ENCODE measurements at regions of chr5 and their contacts with region 1.

Region 1: DNA sequence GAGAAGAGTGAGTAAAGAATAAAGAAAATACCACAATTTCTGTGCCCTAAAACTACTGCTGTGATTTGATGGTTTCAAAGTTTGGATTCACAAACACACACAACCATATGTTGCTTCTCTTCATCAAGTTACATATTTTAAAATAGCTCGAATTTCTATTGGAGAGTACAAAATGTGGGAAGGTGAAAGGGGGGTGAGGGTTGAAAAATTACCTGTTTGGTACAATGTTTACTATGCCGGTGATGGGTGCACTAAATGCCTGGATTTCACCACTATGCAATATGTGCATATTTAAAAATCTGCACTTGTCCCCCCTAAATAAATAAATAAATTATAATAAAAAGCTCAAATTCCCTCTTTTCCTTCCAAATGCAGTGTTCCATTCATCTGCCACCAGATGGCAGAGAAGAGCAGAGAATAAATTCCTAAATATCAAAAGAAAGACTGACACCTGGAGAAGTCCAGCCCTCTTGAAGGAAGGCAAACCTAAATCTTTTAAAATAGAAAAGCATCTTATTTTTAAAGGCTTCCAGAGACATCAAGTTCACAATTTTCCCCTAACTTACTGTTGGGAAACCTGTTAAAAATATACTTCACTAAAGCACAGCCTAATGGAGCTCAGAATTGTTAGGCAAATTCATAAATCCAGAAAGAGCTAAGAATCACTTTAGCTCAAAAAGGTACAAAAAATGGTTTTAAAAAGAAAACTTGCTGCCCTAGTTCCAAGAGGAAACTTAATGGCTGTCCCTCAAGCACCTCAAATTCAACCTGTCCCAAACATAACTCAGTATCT is 24.8 kb upstream of the HNRNPA0 start:
- DNase-seq: no peak
- H3K4me3 ChIP-seq: no peak overlapping the region
- H3K27ac ChIP-seq: no peak overlapping the region
- H3K4me1 ChIP-seq: no peaks in the 10 kb centered on the region
- H3K27me3 ChIP-seq: peaks cover 0 to 1% (median 0%) of the 10 kb centered on the region in 4 experiments; a peak in 1 of 7 replicates
- CTCF ChIP-seq: peak in 2 of 3 experiments; percentile 38 to 52; a peak in 2 of 4 replicates
- EP300 ChIP-seq: no peak
- POLR2A ChIP-seq: no peak
- RAD21 ChIP-seq: peak; percentile 69 to 71

Region 2: DNA sequence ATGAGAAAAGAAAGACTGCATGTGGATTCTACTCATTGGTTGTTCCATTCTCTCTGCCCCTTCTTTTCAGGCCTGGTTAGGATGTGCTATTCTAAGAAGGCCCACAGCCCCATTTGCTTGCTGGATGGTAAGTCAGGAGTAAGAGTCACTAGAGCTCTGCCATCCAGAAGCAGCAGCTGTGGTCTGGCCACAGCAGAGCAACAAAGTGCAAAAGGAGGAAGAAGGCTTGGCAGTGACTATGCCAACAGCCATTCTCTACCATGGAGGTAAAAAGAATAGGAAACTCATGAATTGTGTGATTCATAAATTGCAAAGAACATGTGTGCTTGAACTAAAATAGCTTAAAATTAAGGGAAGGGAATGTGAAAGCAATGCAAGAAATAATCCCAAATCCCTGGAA is 64.0 kb before region 1 on chr5:
- CTCF ChIA-PET with region 1: no interaction called
- POLR2A ChIA-PET with region 1: no interaction called
- DNase-seq: no peak
- H3K4me3 ChIP-seq: no peak overlapping the region
- H3K27ac ChIP-seq: no peak overlapping the region
- H3K4me1 ChIP-seq: no peaks in the 10 kb centered on the region
- H3K27me3 ChIP-seq: no peaks in the 10 kb centered on the region
- CTCF ChIP-seq: no peak
- EP300 ChIP-seq: no peak
- POLR2A ChIP-seq: no peak
- RAD21 ChIP-seq: no peak

Region 3: GRCh38 chr5:137754126-137754960 is 24.6 kb before region 1 on chr5 and contains the start of gene HNRNPA0:
- CTCF ChIA-PET with region 1: interaction called, 10 read pairs
- POLR2A ChIA-PET with region 1: interaction called, 7 read pairs
- DNase-seq: peak; percentile 82 to 96
- H3K4me3 ChIP-seq: peak within 1 kb of the TSS; percentile 92 to 100 (median 100)
- H3K27ac ChIP-seq: peak within 1 kb of the TSS; percentile 100
- H3K4me1 ChIP-seq: peaks cover 0 to 3% (median 0%) of the 10 kb centered on the region in 4 experiments; a peak in 3 of 7 replicates
- H3K27me3 ChIP-seq: no peaks in the 10 kb centered on the region
- CTCF ChIP-seq: no peak
- EP300 ChIP-seq: peak; percentile 18 to 100; a peak in 2 of 3 replicates
- POLR2A ChIP-seq: peak; percentile 97 to 99
- RAD21 ChIP-seq: no peak; a peak in 1 of 4 replicates
- total RNA-seq, gene HNRNPA0: 71.3 and 74.9 TPM in 2 replicates

Region 4: GRCh38 chr5:137800700-137801411 is 21.9 kb after region 1 on chr5:
- CTCF ChIA-PET with region 1: interaction called, 25 read pairs
- POLR2A ChIA-PET with region 1: no interaction called
- DNase-seq: no peak
- H3K4me3 ChIP-seq: no peak overlapping the region
- H3K27ac ChIP-seq: no peak overlapping the region
- H3K4me1 ChIP-seq: no peaks in the 10 kb centered on the region
- H3K27me3 ChIP-seq: no peaks in the 10 kb centered on the region
- CTCF ChIP-seq: peak in 1 of 3 experiments; percentile 16; a peak in 2 of 4 replicates
- EP300 ChIP-seq: no peak
- POLR2A ChIP-seq: no peak
- RAD21 ChIP-seq: 0 out of 4 replicates have a peak, but pooled peaks of 1 of the 2 experiments have one; percentile 21

Region 5: GRCh38 chr5:137815202-137815985 is 36.4 kb after region 1 on chr5:
- CTCF ChIA-PET with region 1: interaction called, 16 read pairs
- POLR2A ChIA-PET with region 1: no interaction called
- DNase-seq: no peak
- H3K4me3 ChIP-seq: no peak overlapping the region
- H3K27ac ChIP-seq: no peak overlapping the region
- H3K4me1 ChIP-seq: no peaks in the 10 kb centered on the region
- H3K27me3 ChIP-seq: no peaks in the 10 kb centered on the region
- CTCF ChIP-seq: no peak
- EP300 ChIP-seq: no peak
- POLR2A ChIP-seq: no peak
- RAD21 ChIP-seq: no peak

Region 6: DNA sequence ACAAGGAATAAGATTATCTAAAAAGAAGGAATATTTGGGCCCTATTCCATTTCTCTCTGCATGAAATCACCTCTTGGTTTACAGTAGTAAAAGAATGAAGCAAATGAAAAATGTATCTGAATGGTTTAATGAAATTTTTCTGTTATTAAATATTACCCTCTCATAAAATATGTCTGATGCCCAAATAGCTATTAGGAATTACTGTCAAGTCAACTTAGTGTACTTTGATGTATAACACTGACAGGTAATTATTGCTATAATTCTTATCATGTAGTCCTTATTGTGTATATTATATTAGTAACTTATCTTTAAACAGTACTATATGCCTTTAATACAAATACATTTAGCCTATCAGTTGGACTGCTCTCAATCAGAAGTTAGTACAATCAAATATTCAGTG is 97.1 kb after region 1 on chr5:
- CTCF ChIA-PET with region 1: interaction called, 16 read pairs
- POLR2A ChIA-PET with region 1: no interaction called
- DNase-seq: no peak
- H3K4me3 ChIP-seq: no peak overlapping the region
- H3K27ac ChIP-seq: no peak overlapping the region
- H3K4me1 ChIP-seq: no peaks in the 10 kb centered on the region
- H3K27me3 ChIP-seq: no peaks in the 10 kb centered on the region
- CTCF ChIP-seq: no peak
- EP300 ChIP-seq: no peak
- POLR2A ChIP-seq: no peak
- RAD21 ChIP-seq: no peak

Region 7: DNA sequence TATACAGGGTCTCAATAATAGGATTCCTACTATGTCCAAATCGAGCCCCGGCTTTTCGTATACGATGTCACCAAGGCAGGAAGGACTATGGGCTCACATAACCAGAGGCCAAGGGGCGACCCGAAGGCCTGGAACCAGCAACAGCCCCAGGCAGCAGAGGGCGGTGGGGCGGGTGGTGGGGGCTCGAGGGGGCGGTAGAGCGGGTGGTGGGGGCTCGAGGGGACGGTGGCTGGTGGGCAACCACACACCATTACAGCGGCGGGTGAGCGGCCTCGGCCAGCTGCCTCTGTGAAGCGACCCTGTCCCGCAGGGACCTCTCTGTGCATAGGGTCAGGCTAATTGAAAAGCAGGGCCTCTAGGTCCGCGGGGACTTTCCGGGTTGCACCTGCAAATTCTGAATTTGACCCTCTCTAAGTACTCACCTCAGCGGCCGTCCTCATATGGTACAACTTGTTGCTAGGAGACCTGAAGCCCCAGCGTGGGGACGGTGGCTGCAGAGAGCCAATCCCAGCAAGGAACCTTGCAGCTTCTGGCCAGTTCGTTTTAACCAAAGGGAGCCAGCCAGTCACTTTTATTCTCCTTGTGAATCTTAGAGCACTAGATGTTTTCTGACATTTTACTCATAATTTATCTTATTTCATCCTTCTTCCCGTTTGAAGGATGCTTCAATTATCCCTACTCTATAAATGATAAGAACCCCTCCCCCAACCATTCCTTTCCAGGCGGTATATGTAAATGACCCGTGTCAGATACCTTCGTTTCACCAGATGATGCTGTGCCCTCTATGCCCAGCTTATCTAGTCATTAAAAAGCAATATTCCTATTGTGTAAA is 360.2 kb after region 1 on chr5 and contains the start of gene NME5:
- CTCF ChIA-PET with region 1: no interaction called
- POLR2A ChIA-PET with region 1: no interaction called
- DNase-seq: peak; percentile 43 to 83
- H3K4me3 ChIP-seq: peak within 1 kb of the TSS; percentile 59 to 78 (median 66)
- H3K27ac ChIP-seq: no peak within 1 kb of the TSS
- H3K4me1 ChIP-seq: no peaks in the 10 kb centered on the region; a peak in 1 of 7 replicates
- H3K27me3 ChIP-seq: no peaks in the 10 kb centered on the region
- CTCF ChIP-seq: no peak
- EP300 ChIP-seq: no peak
- POLR2A ChIP-seq: no peak
- RAD21 ChIP-seq: no peak
- total RNA-seq, gene NME5: 0.63 and 0.89 TPM in 2 replicates